ENCODE measurements at regions of chrX and their contacts with region 1.

Region 1: DNA sequence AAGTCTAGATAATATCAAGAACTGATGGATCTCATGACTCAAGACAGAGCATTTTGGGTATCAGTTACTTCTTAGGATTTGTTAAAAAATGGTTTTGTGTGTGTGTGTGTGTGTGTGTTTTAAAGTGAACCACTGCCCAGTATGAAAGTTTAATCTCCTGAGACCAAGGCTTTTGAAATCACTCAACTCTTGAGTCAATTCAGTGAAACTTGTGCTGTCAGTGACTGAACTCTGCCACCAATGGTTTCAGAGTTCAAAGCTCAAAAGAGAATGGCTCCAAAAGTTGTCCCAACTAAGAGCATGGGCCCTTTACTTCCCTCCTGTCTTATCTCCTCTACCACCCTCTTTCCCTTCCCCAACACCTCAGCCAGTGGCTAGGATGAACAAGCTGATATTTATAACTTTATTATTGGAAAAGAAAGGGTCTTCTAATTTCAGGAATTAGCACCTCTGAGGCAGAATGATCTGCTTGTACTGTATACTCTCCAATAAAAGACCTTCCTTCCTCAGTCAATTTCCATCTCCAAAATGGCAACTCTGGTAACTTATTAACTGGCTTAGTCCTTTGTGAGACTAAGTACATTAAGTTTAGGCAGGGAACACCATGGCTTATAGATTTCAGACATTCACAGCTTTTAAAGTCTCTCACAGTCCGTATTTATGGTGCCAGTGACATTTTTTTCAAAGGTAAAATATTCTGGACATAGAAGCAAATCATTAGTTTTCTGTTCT is 152.2 kb downstream of the REPS2 start:
- DNase-seq: no peak
- H3K4me3 ChIP-seq: no peak overlapping the region
- H3K27ac ChIP-seq: no peak overlapping the region
- H3K27me3 ChIP-seq: no peaks in the 10 kb centered on the region
- CTCF ChIP-seq: no peak

Region 2: GRCh38 chrX:16712834-16713155 is 385.9 kb before region 1 on chrX:
- CTCF ChIA-PET with region 1: no interaction called
- POLR2A ChIA-PET with region 1: interaction called, 13 read pairs
- DNase-seq: no peak
- H3K4me3 ChIP-seq: peak overlapping the region; percentile 66
- H3K27ac ChIP-seq: no peak overlapping the region
- H3K27me3 ChIP-seq: no peaks in the 10 kb centered on the region
- CTCF ChIP-seq: no peak

Region 3: DNA sequence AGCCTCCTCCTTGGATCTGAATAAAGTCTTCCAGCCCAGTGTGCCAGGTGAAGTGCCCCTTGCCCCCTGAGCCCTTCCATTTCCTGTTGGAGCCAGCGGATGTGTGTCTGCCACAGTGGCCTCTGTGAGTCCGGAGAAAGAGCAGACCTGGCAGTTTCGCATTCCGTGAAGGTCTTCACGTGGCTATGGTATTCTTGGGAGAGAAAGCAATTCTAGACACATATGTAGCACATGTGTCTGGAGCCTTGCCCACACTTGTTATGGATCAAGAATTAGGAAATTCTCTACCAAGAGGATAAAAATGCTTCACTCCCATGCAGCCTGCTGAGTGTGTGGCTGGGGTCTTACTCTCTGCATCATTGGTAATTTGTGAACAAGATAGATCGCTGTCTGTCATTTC is 21.3 kb before region 1 on chrX:
- CTCF ChIA-PET with region 1: no interaction called
- POLR2A ChIA-PET with region 1: no interaction called
- DNase-seq: no peak
- H3K4me3 ChIP-seq: no peak overlapping the region
- H3K27ac ChIP-seq: no peak overlapping the region
- H3K27me3 ChIP-seq: no peaks in the 10 kb centered on the region
- CTCF ChIP-seq: no peak

Measured in AG04450 (cell line).